ENCODE measurements at regions of chr19 and their contacts with region 1.

Region 1: GRCh38 chr19:1905071-1905862 is at the starts of genes ADAT3 and SCAMP4:
- DNase-seq: peak; percentile 94
- ATAC-seq: peak; percentile 96
- H3K4me3 ChIP-seq: peak within 1 kb of the TSS; percentile 81
- H3K27ac ChIP-seq: peak within 1 kb of the TSS; percentile 96
- H3K4me1 ChIP-seq: peaks cover 37% of the 10 kb centered on the region
- H3K27me3 ChIP-seq: no peaks in the 10 kb centered on the region
- CTCF ChIP-seq: no peak
- EP300 ChIP-seq: no peak
- POLR2A ChIP-seq: peak; percentile 80
- RAD21 ChIP-seq: no peak
- polyA plus RNA-seq, gene ADAT3: not detected
- polyA plus RNA-seq, gene SCAMP4: 0.63 to 2.3 TPM

Region 2: GRCh38 chr19:1929021-1929742 is 23.9 kb after region 1 on chr19:
- CTCF ChIA-PET with region 1: interaction called, 10 read pairs
- POLR2A ChIA-PET with region 1: interaction called, 3 read pairs
- RAD21 ChIA-PET with region 1: interaction called, 5 read pairs
- SMC1A ChIA-PET with region 1: interaction called, 3 read pairs
- in situ Hi-C with region 1: no loop called
- intact Hi-C with region 1: no loop called
- DNase-seq: no peak
- ATAC-seq: peak; percentile 98
- H3K4me3 ChIP-seq: peak overlapping the region; percentile 45; the same call in 1 of the 2 replicates
- H3K27ac ChIP-seq: no peak overlapping the region
- H3K4me1 ChIP-seq: peaks cover 9% of the 10 kb centered on the region
- H3K27me3 ChIP-seq: no peaks in the 10 kb centered on the region
- CTCF ChIP-seq: peak; percentile 83 to 97 (median 85)
- EP300 ChIP-seq: no peak
- POLR2A ChIP-seq: no peak
- RAD21 ChIP-seq: peak; percentile 89

Region 3: GRCh38 chr19:1942078-1942933 is 37.0 kb after region 1 on chr19:
- CTCF ChIA-PET with region 1: interaction called, 10 read pairs
- POLR2A ChIA-PET with region 1: no interaction called
- RAD21 ChIA-PET with region 1: interaction called, 5 read pairs
- SMC1A ChIA-PET with region 1: no interaction called
- in situ Hi-C with region 1: no loop called
- intact Hi-C with region 1: no loop called
- DNase-seq: peak; percentile 42
- ATAC-seq: peak; percentile 77
- H3K4me3 ChIP-seq: peak overlapping the region; percentile 98
- H3K27ac ChIP-seq: peak overlapping the region; percentile 76
- H3K4me1 ChIP-seq: peaks cover 13% of the 10 kb centered on the region
- H3K27me3 ChIP-seq: no peaks in the 10 kb centered on the region
- CTCF ChIP-seq: no peak
- EP300 ChIP-seq: no peak
- POLR2A ChIP-seq: peak; percentile 71
- RAD21 ChIP-seq: no peak

Measured in GM12878 (cell line).